Naive thymus-derived CD8-positive, alpha-beta T cell (primary cell): ENCODE measurements at regions of chr18 and their contacts with region 1.

Region 1: DNA sequence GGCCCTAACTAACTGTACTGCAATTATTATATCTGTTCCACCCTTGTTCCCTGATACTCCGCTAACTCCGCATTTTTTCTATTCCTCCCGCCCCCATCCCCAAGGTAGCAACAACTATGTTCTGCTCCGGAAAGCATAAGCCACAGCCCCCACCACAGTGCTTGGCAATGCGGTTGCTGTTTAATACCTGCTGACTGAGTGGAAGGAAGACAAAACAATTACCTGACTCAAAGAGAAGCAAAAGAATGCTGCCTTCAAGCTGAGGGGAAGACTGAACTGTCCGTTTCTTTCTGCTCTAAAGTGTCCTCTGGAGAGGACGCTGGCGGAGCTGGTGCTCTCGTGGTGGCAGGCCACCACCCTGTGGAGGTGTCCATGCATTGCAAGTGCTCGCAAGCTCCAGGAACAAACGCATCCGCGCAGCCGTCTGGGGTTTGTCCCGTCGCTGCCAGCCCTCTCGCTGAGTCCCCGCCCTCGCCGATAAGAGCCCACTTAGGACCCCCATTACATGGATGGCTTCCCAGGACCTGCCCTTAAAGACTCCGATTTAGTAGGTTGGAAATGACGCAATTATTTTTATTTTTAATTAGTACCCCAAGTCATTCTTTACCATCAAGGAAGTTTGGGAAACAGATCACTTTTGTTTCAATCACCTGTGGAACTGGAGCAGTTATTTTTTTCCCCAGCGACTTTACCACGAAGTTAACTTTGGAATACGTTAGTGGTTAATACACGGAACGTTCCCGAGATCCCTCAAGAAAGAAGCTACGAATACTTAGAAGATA is 1.6 kb upstream of the MYL12A start:
- DNase-seq: peak; percentile 61 to 86 (median 76)
- ATAC-seq: peak; percentile 51 to 65
- H3K4me3 Mint-ChIP-seq: peak overlapping the region; percentile 84 to 98 (median 96)
- H3K27ac Mint-ChIP-seq: peak overlapping the region; percentile 92 to 100 (median 98)
- H3K4me1 Mint-ChIP-seq: peaks cover 19 to 41% (median 34%) of the 10 kb centered on the region in 4 donors
- H3K27me3 Mint-ChIP-seq: no peaks in the 10 kb centered on the region

Region 2: GRCh38 chr18:2636126-2636631 is 609.9 kb before region 1 on chr18:
- POLR2A ChIA-PET with region 1: interaction called, 15 read pairs
- DNase-seq: peak in 1 of 10 donors; percentile 78
- ATAC-seq: peak; percentile 46 to 48
- H3K4me3 Mint-ChIP-seq: peak overlapping the region; percentile 73 to 91 (median 79)
- H3K27ac Mint-ChIP-seq: peak overlapping the region in 8 of 10 donors; percentile 93 to 100 (median 99)
- H3K4me1 Mint-ChIP-seq: peaks cover 45 to 98% (median 85%) of the 10 kb centered on the region in 4 donors
- H3K27me3 Mint-ChIP-seq: no peaks in the 10 kb centered on the region

Region 3: GRCh38 chr18:2958819-2959298 is 287.2 kb before region 1 on chr18:
- POLR2A ChIA-PET with region 1: interaction called, 21 read pairs
- DNase-seq: peak in 1 of 10 donors; percentile 13
- ATAC-seq: peak in 1 of 2 donors; percentile 36
- H3K4me3 Mint-ChIP-seq: peak overlapping the region in 9 of 10 donors; percentile 43 to 89 (median 65)
- H3K27ac Mint-ChIP-seq: peak overlapping the region; percentile 92 to 99 (median 98)
- H3K4me1 Mint-ChIP-seq: peaks cover 38 to 92% (median 87%) of the 10 kb centered on the region in 4 donors
- H3K27me3 Mint-ChIP-seq: no peaks in the 10 kb centered on the region

Region 4: DNA sequence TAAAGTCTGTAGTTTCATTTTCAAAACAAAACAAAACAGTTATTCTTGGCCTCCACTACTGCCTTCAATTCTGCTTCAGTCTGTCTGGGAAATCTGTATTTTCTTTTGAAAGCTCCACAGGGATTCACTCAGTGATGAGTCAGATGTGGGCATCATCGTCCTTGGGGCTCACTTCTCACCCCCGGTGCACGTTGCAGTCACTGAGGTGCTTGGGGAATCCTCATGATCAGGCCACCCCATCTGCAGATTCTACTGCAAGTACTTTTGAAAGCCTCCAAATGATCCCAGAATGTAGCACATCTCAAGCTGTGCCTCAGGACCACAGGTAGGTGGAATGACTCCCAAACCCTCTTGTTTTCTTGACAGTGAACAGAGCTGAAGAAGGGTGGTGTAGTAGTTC is 267.4 kb before region 1 on chr18:
- POLR2A ChIA-PET with region 1: interaction called, 14 read pairs
- DNase-seq: no peak
- ATAC-seq: peak in 1 of 2 donors; percentile 18
- H3K4me3 Mint-ChIP-seq: peak overlapping the region; percentile 66 to 96 (median 86)
- H3K27ac Mint-ChIP-seq: peak overlapping the region; percentile 88 to 99 (median 96)
- H3K4me1 Mint-ChIP-seq: peaks cover 38 to 89% (median 82%) of the 10 kb centered on the region in 4 donors
- H3K27me3 Mint-ChIP-seq: no peaks in the 10 kb centered on the region

Region 5: DNA sequence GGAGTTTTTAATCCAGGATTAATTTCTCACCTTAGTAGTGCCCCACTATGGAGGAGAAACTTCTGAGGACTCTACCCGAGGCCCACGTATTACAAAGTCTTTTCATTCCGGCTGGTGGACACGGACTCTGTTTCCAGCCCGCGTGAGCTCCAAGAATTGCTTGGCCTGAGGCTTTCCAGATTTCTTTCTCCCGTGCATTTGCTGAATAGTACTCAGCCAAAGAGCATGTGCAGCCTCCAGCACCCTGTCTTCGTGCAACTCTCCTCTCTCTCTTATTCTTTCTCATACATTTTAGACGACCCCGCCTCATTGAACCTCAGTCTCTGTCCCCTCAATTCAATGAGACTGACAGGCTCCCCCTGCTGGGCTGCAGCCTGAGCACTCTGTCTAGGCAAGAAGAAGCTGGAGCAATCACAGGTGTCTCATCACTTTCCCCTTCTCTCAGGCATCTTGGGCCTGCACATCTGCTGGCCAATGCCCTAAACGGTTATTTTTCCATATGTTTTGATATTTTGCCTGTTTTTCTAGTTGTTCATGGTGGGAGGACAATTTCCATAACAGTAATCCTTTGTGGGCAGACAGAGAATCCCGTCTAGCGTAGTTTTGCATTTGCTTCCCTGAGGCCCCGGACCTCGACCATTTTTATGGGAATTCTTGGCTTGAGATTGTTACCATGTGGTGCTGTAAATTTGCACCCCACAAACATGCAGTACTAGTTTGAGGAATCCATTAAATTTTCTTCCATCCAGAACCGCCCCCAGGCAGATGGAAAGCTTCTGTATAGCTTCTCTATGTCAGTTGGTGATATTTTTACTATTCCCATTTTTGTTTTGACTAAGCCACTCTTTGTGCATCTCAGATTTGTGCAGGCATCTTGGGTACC is 183.0 kb before region 1 on chr18:
- POLR2A ChIA-PET with region 1: interaction called, 44 read pairs
- DNase-seq: peak; percentile 34 to 89 (median 59)
- ATAC-seq: peak; percentile 40 to 48
- H3K4me3 Mint-ChIP-seq: peak overlapping the region; percentile 35 to 86 (median 66)
- H3K27ac Mint-ChIP-seq: peak overlapping the region; percentile 70 to 99 (median 97)
- H3K4me1 Mint-ChIP-seq: peaks cover 35 to 70% (median 60%) of the 10 kb centered on the region in 4 donors
- H3K27me3 Mint-ChIP-seq: no peaks in the 10 kb centered on the region

Region 6: GRCh38 chr18:3261371-3262246 is 15.6 kb after region 1 on chr18 and contains the start of gene MYL12B:
- POLR2A ChIA-PET with region 1: interaction called, 244 read pairs
- DNase-seq: peak; percentile 64 to 94 (median 77)
- ATAC-seq: peak; percentile 73 to 76
- H3K4me3 Mint-ChIP-seq: peak within 1 kb of the TSS; percentile 91 to 100 (median 98)
- H3K27ac Mint-ChIP-seq: peak within 1 kb of the TSS; percentile 97 to 100 (median 99)
- H3K4me1 Mint-ChIP-seq: peaks cover 40 to 89% (median 84%) of the 10 kb centered on the region in 4 donors
- H3K27me3 Mint-ChIP-seq: no peaks in the 10 kb centered on the region
- polyA plus RNA-seq, gene MYL12B: 828 to 956 (median 830) TPM

Region 7: DNA sequence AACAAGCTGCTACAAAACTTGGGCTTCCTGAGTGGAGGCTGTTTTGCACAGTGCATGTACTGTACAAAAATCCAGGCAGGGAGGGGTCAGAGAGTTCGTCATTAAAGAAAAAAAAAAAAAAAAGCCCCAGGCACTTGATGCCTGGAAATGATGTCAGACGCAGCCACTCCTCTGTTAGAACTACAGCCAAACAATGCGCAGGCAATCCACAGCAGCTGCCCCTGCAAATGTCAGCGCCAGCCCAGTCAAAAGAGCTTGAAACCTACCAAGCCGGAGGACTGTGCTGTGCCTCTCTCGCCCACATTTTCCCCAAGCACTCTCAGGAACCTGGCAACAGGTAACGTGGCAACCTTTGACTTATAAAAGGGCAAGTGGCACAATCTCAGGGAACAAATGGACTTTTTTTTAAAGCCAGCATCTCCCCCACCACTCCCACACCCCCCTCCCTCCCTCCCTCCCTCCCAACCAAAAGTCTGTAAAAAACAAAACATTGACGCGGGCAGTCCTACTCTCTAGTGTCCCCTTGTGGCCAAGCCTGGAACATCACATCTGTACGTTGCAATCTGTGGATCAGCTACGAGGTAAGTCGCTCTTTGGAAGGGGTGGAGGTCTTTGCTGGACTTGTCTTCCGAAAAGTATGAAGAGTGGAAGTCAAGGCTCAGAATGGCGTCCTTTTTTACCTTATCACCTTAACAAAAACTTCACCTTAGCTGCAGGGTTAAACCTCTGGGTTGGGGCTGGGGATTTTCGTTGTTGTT is 348.0 kb after region 1 on chr18:
- POLR2A ChIA-PET with region 1: interaction called, 33 read pairs
- DNase-seq: peak; percentile 67 to 97 (median 90)
- ATAC-seq: peak; percentile 86 to 87
- H3K4me3 Mint-ChIP-seq: peak overlapping the region; percentile 87 to 96 (median 92)
- H3K27ac Mint-ChIP-seq: peak overlapping the region; percentile 97 to 100 (median 100)
- H3K4me1 Mint-ChIP-seq: peaks cover 22 to 65% (median 53%) of the 10 kb centered on the region in 4 donors
- H3K27me3 Mint-ChIP-seq: no peaks in the 10 kb centered on the region